Activated CD4-positive, alpha-beta T cell treated with anti-CD3 and anti-CD28 coated beads for 36 hours (primary cell): ENCODE measurements at regions of chr1 and their contacts with region 1.

Region 1: GRCh38 chr1:244291236-244292201 is 160.2 kb downstream of the ADSS2 start:
- DNase-seq: no peak
- ATAC-seq: no peak
- H3K4me3 Mint-ChIP-seq: no peak overlapping the region
- H3K27ac Mint-ChIP-seq: no peak overlapping the region
- H3K4me1 Mint-ChIP-seq: peaks cover 10% of the 10 kb centered on the region
- H3K27me3 Mint-ChIP-seq: no peaks in the 10 kb centered on the region

Region 2: GRCh38 chr1:244065960-244066388 is 225.5 kb before region 1 on chr1:
- CTCF ChIA-PET with region 1: no interaction called
- POLR2A ChIA-PET with region 1: no interaction called
- intact Hi-C with region 1: no loop called
- DNase-seq: no peak
- ATAC-seq: no peak
- H3K4me3 Mint-ChIP-seq: no peak overlapping the region
- H3K27ac Mint-ChIP-seq: no peak overlapping the region
- H3K4me1 Mint-ChIP-seq: peaks cover 4% of the 10 kb centered on the region
- H3K27me3 Mint-ChIP-seq: no peaks in the 10 kb centered on the region

Region 3: GRCh38 chr1:244302889-244303613 is 11.5 kb after region 1 on chr1:
- CTCF ChIA-PET with region 1: interaction called, 13 read pairs
- POLR2A ChIA-PET with region 1: no interaction called
- intact Hi-C with region 1: no loop called
- DNase-seq: no peak
- ATAC-seq: no peak
- H3K4me3 Mint-ChIP-seq: no peak overlapping the region
- H3K27ac Mint-ChIP-seq: no peak overlapping the region
- H3K4me1 Mint-ChIP-seq: peaks cover 11% of the 10 kb centered on the region
- H3K27me3 Mint-ChIP-seq: no peaks in the 10 kb centered on the region